Prostate gland (tissue), 2 donors: ENCODE measurements at regions of chr18 and their contacts with region 1.

Region 1: DNA sequence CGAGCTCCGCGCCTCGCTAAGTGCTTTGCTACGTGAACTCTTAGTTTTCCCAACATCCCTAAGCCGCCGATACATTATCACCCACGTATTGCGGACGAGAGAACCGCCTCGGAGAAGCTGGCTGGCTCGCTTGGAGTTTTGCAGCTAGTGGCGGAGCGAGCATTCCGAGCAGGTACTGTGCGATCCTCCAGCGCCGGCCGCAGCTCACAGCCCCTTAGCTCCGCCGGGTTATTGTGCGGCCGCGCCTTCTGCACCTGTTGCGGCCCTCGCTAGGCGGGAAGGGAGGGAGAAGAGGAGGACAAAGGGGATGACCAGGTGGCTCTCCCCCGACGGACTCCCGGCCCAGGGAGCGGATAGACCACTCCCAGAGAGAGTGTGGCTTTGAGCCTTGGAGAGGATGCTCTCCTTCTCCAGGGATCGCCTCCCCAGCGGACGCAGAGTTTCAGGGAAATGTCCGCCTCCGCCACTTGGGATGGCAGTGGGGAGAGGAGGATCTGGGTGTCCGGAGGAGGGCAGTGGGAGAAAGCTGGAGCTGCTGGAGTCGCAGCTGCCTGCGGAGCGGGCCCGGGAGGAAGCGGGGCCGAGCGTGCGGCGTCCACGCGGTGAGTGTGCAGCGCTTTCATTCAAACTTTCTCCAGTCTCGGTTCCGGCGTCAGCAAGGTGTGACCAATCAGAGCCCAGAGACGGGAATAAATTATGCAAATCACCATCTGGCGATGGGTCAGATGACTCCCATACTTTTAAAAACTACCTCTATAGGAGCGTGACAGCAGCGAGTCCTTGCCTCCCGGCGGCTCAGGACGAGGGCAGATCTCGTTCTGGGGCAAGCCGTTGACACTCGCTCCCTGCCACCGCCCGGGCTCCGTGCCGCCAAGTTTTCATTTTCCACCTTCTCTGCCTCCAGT is at the start of gene LIPG:
- DNase-seq: peak; percentile 75
- H3K4me3 ChIP-seq: peak within 1 kb of the TSS; percentile 16 to 21
- H3K27ac ChIP-seq: peak within 1 kb of the TSS in 1 of 2 donors; percentile 14
- H3K4me1 ChIP-seq: peaks cover 15% of the 10 kb centered on the region
- H3K27me3 ChIP-seq: no peaks in the 10 kb centered on the region
- CTCF ChIP-seq: no peak
- POLR2A ChIP-seq: peak; percentile 42
- total RNA-seq, gene LIPG: 0.36 to 28.5 TPM

Region 2: GRCh38 chr18:48951448-48952286 is 609.9 kb before region 1 on chr18:
- intact Hi-C with region 1: no loop called
- DNase-seq: peak; percentile 85
- H3K4me3 ChIP-seq: peak overlapping the region; percentile 70 to 93
- H3K27ac ChIP-seq: peak overlapping the region; percentile 98 to 99
- H3K4me1 ChIP-seq: peaks cover 3% of the 10 kb centered on the region
- H3K27me3 ChIP-seq: no peaks in the 10 kb centered on the region
- CTCF ChIP-seq: peak in 2 of 4 experiments; percentile 35 to 36
- POLR2A ChIP-seq: peak; percentile 89

Region 3: DNA sequence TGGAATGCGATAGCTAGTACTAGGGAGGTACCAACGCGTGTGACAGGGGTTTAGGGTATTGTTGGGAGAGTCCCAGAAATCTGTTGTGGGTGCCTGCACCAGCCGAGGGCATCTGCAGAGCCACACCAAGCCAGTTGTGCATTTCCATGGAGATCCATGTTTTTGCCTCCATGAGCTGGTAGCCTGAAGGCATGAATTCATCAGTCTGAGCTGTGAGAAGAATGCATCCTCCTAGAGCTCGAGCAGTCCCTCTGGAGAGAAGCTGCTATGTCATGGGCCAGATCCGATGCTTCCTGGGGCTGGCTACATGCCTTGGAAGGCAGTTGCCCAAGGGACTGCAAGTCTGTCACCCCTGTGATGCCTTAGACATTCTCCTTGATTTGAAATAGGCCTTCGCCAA is 58.3 kb after region 1 on chr18:
- intact Hi-C with region 1: loop called (anchors 5 kb)
- DNase-seq: no peak
- H3K4me3 ChIP-seq: no peak overlapping the region
- H3K27ac ChIP-seq: no peak overlapping the region
- H3K4me1 ChIP-seq: peaks cover 9% of the 10 kb centered on the region
- H3K27me3 ChIP-seq: no peaks in the 10 kb centered on the region
- CTCF ChIP-seq: no peak
- POLR2A ChIP-seq: no peak

Region 4: GRCh38 chr18:49768051-49768391 is 206.5 kb after region 1 on chr18:
- intact Hi-C with region 1: loop called (anchors 2 kb)
- DNase-seq: peak; percentile 71
- H3K4me3 ChIP-seq: no peak overlapping the region
- H3K27ac ChIP-seq: no peak overlapping the region
- H3K4me1 ChIP-seq: no peaks in the 10 kb centered on the region
- H3K27me3 ChIP-seq: no peaks in the 10 kb centered on the region
- CTCF ChIP-seq: peak; percentile 43 to 70 (median 65)
- POLR2A ChIP-seq: no peak

Region 5: DNA sequence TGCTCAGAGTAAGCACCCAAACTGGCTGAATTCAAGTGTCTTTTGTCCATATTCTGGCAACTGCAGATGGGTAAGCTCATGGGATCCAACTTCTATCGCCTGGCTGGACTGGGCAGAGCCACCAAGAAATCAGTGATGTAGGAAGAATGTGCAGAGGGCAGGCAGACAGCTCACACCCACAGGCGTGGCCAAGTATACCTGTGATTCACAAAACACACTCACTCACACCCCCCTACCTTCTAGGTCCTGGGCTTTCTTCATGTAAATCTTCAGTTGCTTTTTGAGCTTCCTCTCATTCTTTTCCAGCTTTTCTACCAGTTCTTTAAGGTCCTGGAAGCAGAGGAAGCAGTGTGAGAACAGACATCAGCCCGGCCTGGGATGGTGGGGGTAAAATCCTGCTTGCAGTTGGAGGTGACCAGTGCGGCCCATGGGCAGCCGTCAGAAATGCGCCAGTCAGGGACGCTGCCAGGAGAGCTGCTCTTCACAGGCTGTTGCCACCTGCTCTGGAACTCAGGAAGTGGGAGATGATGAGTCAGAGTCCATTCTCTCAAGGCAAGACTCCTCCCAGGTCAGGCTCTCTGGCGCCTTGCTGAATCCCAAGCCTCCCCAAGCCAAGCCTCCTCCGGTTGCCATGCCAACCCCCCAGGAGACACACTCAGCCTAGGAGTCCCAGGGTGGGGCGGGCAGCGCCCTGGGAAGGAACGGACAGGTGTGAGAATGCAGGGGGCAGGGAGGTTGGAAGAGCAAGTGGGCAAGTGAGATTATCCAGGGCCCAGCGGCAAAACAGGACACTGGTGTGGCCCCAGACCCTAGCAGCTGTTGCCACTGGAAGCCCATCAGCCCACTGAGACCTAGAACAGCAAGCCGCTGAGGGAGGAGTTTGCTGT is 288.0 kb after region 1 on chr18:
- intact Hi-C with region 1: no loop called
- DNase-seq: no peak
- H3K4me3 ChIP-seq: no peak overlapping the region
- H3K27ac ChIP-seq: no peak overlapping the region
- H3K4me1 ChIP-seq: no peaks in the 10 kb centered on the region
- H3K27me3 ChIP-seq: no peaks in the 10 kb centered on the region
- CTCF ChIP-seq: no peak
- POLR2A ChIP-seq: no peak